CD4-positive, alpha-beta T cell (primary cell): ENCODE measurements at regions of chr7 and their contacts with region 1.

Region 1: DNA sequence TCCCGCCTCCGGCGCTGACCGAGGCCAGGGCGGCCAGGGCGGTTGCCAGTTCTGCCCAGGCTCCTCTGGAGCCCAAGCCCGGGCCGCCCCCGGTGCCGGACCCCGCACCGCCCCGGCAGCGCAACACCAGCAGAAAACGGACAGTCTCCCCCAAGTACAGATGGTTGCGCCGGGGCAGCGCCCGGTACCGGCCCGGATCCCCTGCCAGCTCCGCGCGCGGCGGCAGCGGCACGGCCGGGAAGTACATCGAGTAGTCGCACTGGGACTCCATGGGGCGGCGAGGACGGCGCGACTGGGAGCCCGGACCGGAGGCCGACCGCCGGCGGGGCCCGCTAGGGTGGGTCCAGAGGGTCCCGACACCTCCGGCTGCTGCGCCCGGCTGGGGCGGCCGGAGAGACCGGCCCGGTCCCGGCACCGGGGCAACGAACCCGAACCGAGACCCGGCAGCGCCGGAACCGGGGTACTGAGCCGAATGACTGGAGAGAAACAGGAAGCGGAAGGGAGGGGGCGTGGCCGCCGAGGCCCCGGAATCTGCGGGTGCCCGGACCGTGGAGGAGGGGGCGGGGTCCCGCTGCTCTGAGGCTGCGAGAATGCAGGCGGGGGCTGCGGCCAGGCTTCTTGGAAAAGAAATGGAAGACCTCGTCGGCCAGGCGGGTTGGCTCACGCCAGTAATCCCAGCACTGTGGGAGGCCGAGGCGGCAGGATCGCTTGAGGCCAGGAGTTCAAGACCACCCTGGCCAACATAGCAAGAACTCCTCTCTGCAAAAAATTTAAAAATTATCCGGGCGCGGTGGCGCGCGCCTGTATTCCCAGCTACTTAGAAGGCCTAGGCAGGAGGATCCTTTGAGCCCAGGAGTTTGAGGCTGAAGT is at the start of gene TRAPPC14:
- DNase-seq: peak; percentile 79 to 98 (median 90)
- ATAC-seq: peak; percentile 84
- H3K4me3 ChIP-seq: peak within 1 kb of the TSS; percentile 71
- H3K4me3 Mint-ChIP-seq: peak within 1 kb of the TSS; percentile 93
- H3K27ac ChIP-seq: peak within 1 kb of the TSS; percentile 48 to 87
- H3K27ac Mint-ChIP-seq: peak within 1 kb of the TSS; percentile 76
- H3K4me1 ChIP-seq: peaks cover 61% of the 10 kb centered on the region
- H3K4me1 Mint-ChIP-seq: peaks cover 59% of the 10 kb centered on the region
- H3K27me3 ChIP-seq: no peaks in the 10 kb centered on the region
- H3K27me3 Mint-ChIP-seq: no peaks in the 10 kb centered on the region
- CTCF ChIP-seq: no peak
- total RNA-seq, gene TRAPPC14: 37.9 to 42.6 TPM

Region 2: GRCh38 chr7:99990460-99990852 is 168.0 kb before region 1 on chr7:
- CTCF ChIA-PET with region 1: no interaction called
- POLR2A ChIA-PET with region 1: no interaction called
- intact Hi-C with region 1: no loop called
- DNase-seq: no peak
- ATAC-seq: no peak
- H3K4me3 ChIP-seq: no peak overlapping the region
- H3K4me3 Mint-ChIP-seq: no peak overlapping the region
- H3K27ac ChIP-seq: no peak overlapping the region
- H3K27ac Mint-ChIP-seq: no peak overlapping the region
- H3K4me1 ChIP-seq: peaks cover 12% of the 10 kb centered on the region
- H3K4me1 Mint-ChIP-seq: peaks cover 5% of the 10 kb centered on the region
- H3K27me3 ChIP-seq: no peaks in the 10 kb centered on the region
- H3K27me3 Mint-ChIP-seq: no peaks in the 10 kb centered on the region
- CTCF ChIP-seq: no peak

Region 3: DNA sequence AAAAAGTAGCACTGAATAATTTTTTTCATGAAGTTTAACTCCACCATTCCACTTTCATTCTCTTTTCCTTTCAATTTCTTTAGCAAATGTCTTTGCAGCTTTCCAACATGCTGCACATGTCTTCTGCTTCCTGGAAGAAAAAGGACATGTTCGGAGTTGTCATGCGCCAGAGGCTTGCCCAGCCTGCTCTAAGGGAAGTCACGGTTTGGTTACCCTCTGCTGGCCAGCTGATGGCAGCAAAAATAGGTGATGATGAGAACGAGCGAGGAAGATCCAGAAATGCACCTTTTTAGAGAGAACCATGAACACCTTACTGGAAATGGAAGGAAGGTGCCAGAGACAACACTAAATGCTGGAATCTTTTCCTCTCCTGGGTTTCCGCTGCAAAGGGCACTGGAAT is 113.8 kb before region 1 on chr7:
- CTCF ChIA-PET with region 1: no interaction called
- POLR2A ChIA-PET with region 1: no interaction called
- intact Hi-C with region 1: no loop called
- DNase-seq: peak in 4 of 14 experiments; percentile 12 to 44 (median 32)
- ATAC-seq: no peak
- H3K4me3 ChIP-seq: no peak overlapping the region
- H3K4me3 Mint-ChIP-seq: no peak overlapping the region
- H3K27ac ChIP-seq: no peak overlapping the region
- H3K27ac Mint-ChIP-seq: no peak overlapping the region
- H3K4me1 ChIP-seq: peaks cover 16% of the 10 kb centered on the region
- H3K4me1 Mint-ChIP-seq: peaks cover 28% of the 10 kb centered on the region
- H3K27me3 ChIP-seq: no peaks in the 10 kb centered on the region
- H3K27me3 Mint-ChIP-seq: no peaks in the 10 kb centered on the region
- CTCF ChIP-seq: no peak

Region 4: GRCh38 chr7:100081535-100082102 is 76.8 kb before region 1 on chr7 and contains the start of gene ZNF3:
- CTCF ChIA-PET with region 1: no interaction called
- POLR2A ChIA-PET with region 1: no interaction called
- intact Hi-C with region 1: no loop called
- DNase-seq: peak; percentile 92 to 99 (median 96)
- ATAC-seq: peak; percentile 85
- H3K4me3 ChIP-seq: peak within 1 kb of the TSS; percentile 84
- H3K4me3 Mint-ChIP-seq: peak within 1 kb of the TSS; percentile 90
- H3K27ac ChIP-seq: peak within 1 kb of the TSS; percentile 75 to 80
- H3K27ac Mint-ChIP-seq: peak within 1 kb of the TSS; percentile 83
- H3K4me1 ChIP-seq: peaks cover 36% of the 10 kb centered on the region
- H3K4me1 Mint-ChIP-seq: peaks cover 39% of the 10 kb centered on the region
- H3K27me3 ChIP-seq: no peaks in the 10 kb centered on the region
- H3K27me3 Mint-ChIP-seq: no peaks in the 10 kb centered on the region
- CTCF ChIP-seq: peak; percentile 96
- total RNA-seq, gene ZNF3: 38.3 to 40.3 TPM

Region 5: GRCh38 chr7:100171087-100171681 is 12.7 kb after region 1 on chr7:
- CTCF ChIA-PET with region 1: interaction called, 4 read pairs
- POLR2A ChIA-PET with region 1: interaction called, 109 read pairs
- intact Hi-C with region 1: loop called (anchors 2 kb)
- DNase-seq: peak in 6 of 14 experiments; percentile 25 to 69 (median 56)
- ATAC-seq: peak; percentile 22
- H3K4me3 ChIP-seq: peak overlapping the region; percentile 52
- H3K4me3 Mint-ChIP-seq: peak overlapping the region; percentile 85
- H3K27ac ChIP-seq: peak overlapping the region in 1 of 2 donors; percentile 50
- H3K27ac Mint-ChIP-seq: peak overlapping the region; percentile 91
- H3K4me1 ChIP-seq: peaks cover 65% of the 10 kb centered on the region
- H3K4me1 Mint-ChIP-seq: peaks cover 62% of the 10 kb centered on the region
- H3K27me3 ChIP-seq: peaks cover 0 to 3% of the 10 kb centered on the region in 2 experiments
- H3K27me3 Mint-ChIP-seq: no peaks in the 10 kb centered on the region
- CTCF ChIP-seq: no peak

Region 6: GRCh38 chr7:100177045-100178001 is 18.9 kb after region 1 on chr7 and contains the starts of genes GPC2 and STAG3:
- CTCF ChIA-PET with region 1: interaction called, 4 read pairs
- POLR2A ChIA-PET with region 1: interaction called, 109 read pairs
- intact Hi-C with region 1: loop called (anchors 2 kb)
- DNase-seq: peak; percentile 95 to 98 (median 98)
- ATAC-seq: peak; percentile 87
- H3K4me3 ChIP-seq: peak within 1 kb of the TSS; percentile 70
- H3K4me3 Mint-ChIP-seq: peak within 1 kb of the TSS; percentile 82
- H3K27ac ChIP-seq: peak within 1 kb of the TSS in 1 of 2 donors; percentile 41
- H3K27ac Mint-ChIP-seq: peak within 1 kb of the TSS; percentile 34
- H3K4me1 ChIP-seq: peaks cover 48% of the 10 kb centered on the region
- H3K4me1 Mint-ChIP-seq: peaks cover 48% of the 10 kb centered on the region
- H3K27me3 ChIP-seq: no peaks in the 10 kb centered on the region
- H3K27me3 Mint-ChIP-seq: no peaks in the 10 kb centered on the region
- CTCF ChIP-seq: no peak
- total RNA-seq, gene GPC2: 16.4 to 18.7 TPM
- total RNA-seq, gene STAG3: 4.0 to 5.5 TPM

Region 7: GRCh38 chr7:100271716-100272537 is 113.5 kb after region 1 on chr7:
- CTCF ChIA-PET with region 1: no interaction called
- POLR2A ChIA-PET with region 1: no interaction called
- intact Hi-C with region 1: loop called in 1 of 2 experiments (anchors 5 kb)
- DNase-seq: peak; percentile 97 to 100 (median 98)
- ATAC-seq: peak; percentile 91
- H3K4me3 ChIP-seq: peak overlapping the region; percentile 52
- H3K4me3 Mint-ChIP-seq: peak overlapping the region; percentile 85
- H3K27ac ChIP-seq: no peak overlapping the region
- H3K27ac Mint-ChIP-seq: peak overlapping the region; percentile 69
- H3K4me1 ChIP-seq: peaks cover 17% of the 10 kb centered on the region
- H3K4me1 Mint-ChIP-seq: peaks cover 8% of the 10 kb centered on the region
- H3K27me3 ChIP-seq: no peaks in the 10 kb centered on the region
- H3K27me3 Mint-ChIP-seq: no peaks in the 10 kb centered on the region
- CTCF ChIP-seq: no peak